Body of pancreas (tissue), 4 donors: ENCODE measurements at regions of chr11 and their contacts with region 1.

Region 1: GRCh38 chr11:94623120-94623735 is 56.1 kb downstream of the PIWIL4 start:
- DNase-seq: peak; percentile 56 to 73 (median 64)
- ATAC-seq: peak; percentile 87
- H3K4me3 ChIP-seq: no peak overlapping the region
- H3K27ac ChIP-seq: no peak overlapping the region
- H3K4me1 ChIP-seq: peaks cover 6% of the 10 kb centered on the region
- H3K27me3 ChIP-seq: no peaks in the 10 kb centered on the region
- CTCF ChIP-seq: peak; percentile 72 to 93 (median 89)
- POLR2A ChIP-seq: no peak

Region 2: DNA sequence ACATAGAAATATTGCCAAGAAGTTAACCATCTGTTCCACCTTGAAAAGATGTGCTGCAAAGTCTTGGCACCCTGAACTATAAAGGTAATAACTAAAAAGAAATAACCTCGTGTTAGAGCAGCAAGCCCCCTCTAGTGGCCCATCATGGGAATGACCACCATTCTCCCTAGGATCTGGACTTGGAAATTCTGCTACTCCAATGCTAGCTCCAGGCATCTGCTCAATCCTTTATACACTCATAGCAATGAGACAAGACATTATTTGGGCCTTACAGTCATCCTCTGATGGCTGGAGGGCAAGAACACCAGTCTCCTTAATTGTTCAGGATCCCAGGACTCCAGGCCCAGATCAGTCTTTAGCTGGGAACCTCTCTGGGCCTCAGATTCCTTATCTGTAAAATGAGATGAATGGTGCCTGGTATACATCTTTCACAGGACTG is 274.1 kb after region 1 on chr11:
- intact Hi-C with region 1: loop called (anchors 10 kb)
- DNase-seq: peak; percentile 56 to 76 (median 58)
- ATAC-seq: peak; percentile 68
- H3K4me3 ChIP-seq: no peak overlapping the region
- H3K27ac ChIP-seq: no peak overlapping the region
- H3K4me1 ChIP-seq: no peaks in the 10 kb centered on the region
- H3K27me3 ChIP-seq: no peaks in the 10 kb centered on the region
- CTCF ChIP-seq: peak; percentile 51 to 81 (median 73)
- POLR2A ChIP-seq: no peak